GM12878 (cell line): ENCODE measurements at regions of chr22 and their contacts with region 1.

Region 1: GRCh38 chr22:22043296-22044078 is 60.9 kb upstream of the TOP3B start:
- DNase-seq: no peak
- ATAC-seq: peak; percentile 85
- H3K4me3 ChIP-seq: peak overlapping the region; percentile 44; the same call in 1 of the 2 replicates
- H3K27ac ChIP-seq: peak overlapping the region; percentile 58
- H3K4me1 ChIP-seq: peaks cover 15% of the 10 kb centered on the region
- H3K27me3 ChIP-seq: no peaks in the 10 kb centered on the region
- CTCF ChIP-seq: peak in 2 of 3 experiments; percentile 2 to 20; a peak in 1 of 6 replicates
- EP300 ChIP-seq: no peak
- POLR2A ChIP-seq: peak; percentile 56
- RAD21 ChIP-seq: no peak

Region 2: GRCh38 chr22:21927174-21927823 is 116.2 kb before region 1 on chr22:
- CTCF ChIA-PET with region 1: no interaction called
- POLR2A ChIA-PET with region 1: no interaction called
- RAD21 ChIA-PET with region 1: no interaction called
- SMC1A ChIA-PET with region 1: no interaction called
- in situ Hi-C with region 1: no loop called
- intact Hi-C with region 1: no loop called
- DNase-seq: no peak
- ATAC-seq: no peak
- H3K4me3 ChIP-seq: no peak overlapping the region
- H3K27ac ChIP-seq: no peak overlapping the region
- H3K4me1 ChIP-seq: no peaks in the 10 kb centered on the region
- H3K27me3 ChIP-seq: no peaks in the 10 kb centered on the region
- CTCF ChIP-seq: no peak
- EP300 ChIP-seq: no peak
- POLR2A ChIP-seq: no peak
- RAD21 ChIP-seq: no peak

Region 3: GRCh38 chr22:21972293-21972779 is 71.2 kb before region 1 on chr22:
- CTCF ChIA-PET with region 1: interaction called, 18 read pairs
- POLR2A ChIA-PET with region 1: no interaction called
- RAD21 ChIA-PET with region 1: interaction called, 3 read pairs
- SMC1A ChIA-PET with region 1: no interaction called
- in situ Hi-C with region 1: no loop called
- intact Hi-C with region 1: no loop called
- DNase-seq: no peak
- ATAC-seq: peak; percentile 92
- H3K4me3 ChIP-seq: no peak overlapping the region
- H3K27ac ChIP-seq: no peak overlapping the region
- H3K4me1 ChIP-seq: no peaks in the 10 kb centered on the region; the same call in 1 of the 2 replicates
- H3K27me3 ChIP-seq: no peaks in the 10 kb centered on the region
- CTCF ChIP-seq: peak; percentile 70 to 95 (median 94)
- EP300 ChIP-seq: no peak
- POLR2A ChIP-seq: no peak
- RAD21 ChIP-seq: peak; percentile 75

Region 4: DNA sequence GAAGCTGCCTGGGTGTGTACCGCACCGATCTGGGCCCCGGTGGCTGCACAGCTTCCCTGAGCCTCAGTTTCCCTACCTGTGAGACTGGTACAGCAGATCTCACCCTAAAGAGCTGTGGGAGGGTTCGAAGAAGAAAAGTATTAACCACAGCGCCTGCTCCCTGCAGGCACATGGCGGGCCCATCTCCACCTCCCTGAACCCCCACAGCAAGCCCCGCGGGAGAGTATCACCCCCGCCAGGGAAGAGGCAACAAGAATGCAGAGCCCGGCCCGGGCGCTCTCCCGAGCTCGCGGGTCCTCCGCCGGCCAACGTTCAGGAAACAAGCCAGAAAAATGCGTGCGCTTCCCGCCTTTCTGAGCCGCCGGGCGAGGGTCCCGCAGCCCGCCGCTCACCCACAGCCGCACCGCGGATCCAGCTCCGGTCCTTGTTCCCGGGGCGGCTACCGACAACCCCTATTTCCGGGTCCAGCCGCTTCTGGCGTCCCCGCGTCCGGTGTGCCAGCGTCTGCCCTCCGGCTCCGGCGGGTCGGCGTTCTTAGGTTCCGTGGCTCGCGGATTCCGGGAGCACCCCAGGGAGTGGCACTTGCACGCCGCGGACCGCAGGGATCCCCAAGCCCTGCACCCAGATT is 61.0 kb before region 1 on chr22 and contains the start of gene TOP3B:
- CTCF ChIA-PET with region 1: interaction called, 3 read pairs
- POLR2A ChIA-PET with region 1: interaction called, 3 read pairs
- RAD21 ChIA-PET with region 1: interaction called, 11 read pairs
- SMC1A ChIA-PET with region 1: interaction called, 3 read pairs
- in situ Hi-C with region 1: no loop called
- intact Hi-C with region 1: no loop called
- DNase-seq: peak; percentile 17
- ATAC-seq: peak; percentile 93
- H3K4me3 ChIP-seq: peak within 1 kb of the TSS; percentile 79
- H3K27ac ChIP-seq: peak within 1 kb of the TSS; percentile 69
- H3K4me1 ChIP-seq: peaks cover 4% of the 10 kb centered on the region
- H3K27me3 ChIP-seq: no peaks in the 10 kb centered on the region
- CTCF ChIP-seq: no peak
- EP300 ChIP-seq: no peak
- POLR2A ChIP-seq: peak; percentile 92
- RAD21 ChIP-seq: peak; percentile 30; the same call in 1 of the 2 replicates
- polyA plus RNA-seq, gene TOP3B: 0.60 to 1.6 TPM

Region 5: DNA sequence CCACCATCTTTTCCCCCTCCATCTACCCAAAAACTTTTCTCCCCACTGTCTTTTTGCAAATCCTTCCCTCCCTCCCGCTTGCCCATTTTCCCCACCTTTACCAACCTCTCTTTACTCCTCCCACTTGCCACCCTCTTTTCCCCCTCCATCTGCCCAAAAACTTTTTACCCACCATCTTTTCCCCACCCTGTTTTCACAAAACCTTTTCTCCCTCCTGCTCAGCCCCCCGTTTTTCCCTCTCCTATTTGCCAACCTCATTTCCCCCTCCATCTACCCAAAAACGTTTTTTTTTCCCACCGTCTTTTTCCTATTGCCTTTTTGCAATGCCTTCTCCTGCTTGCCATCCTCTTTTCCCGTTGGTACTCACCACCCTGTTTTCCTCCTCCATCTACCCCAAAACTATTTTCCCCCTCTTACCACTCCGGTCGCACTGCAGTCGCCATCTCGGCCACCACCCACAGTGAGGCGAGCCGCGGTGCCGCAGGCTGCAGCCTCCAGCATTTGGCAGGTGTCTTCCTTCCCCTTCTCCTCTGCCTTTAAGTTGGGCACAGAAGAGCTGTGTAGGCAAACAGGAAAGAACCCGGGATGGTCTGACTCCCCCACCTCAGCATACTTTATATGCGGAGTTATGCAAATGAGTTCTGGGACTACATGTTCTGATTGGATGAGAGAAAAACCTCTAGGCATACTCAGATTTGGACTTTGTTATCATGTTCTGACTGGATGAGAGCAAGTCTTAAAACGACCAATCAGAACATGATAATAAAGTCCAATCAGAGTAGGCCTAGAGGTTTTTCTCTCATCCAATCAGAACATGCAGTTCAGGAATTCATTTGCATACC is 79.9 kb after region 1 on chr22:
- CTCF ChIA-PET with region 1: interaction called, 5 read pairs
- POLR2A ChIA-PET with region 1: interaction called, 6 read pairs
- RAD21 ChIA-PET with region 1: interaction called, 12 read pairs
- SMC1A ChIA-PET with region 1: interaction called, 8 read pairs
- in situ Hi-C with region 1: no loop called
- intact Hi-C with region 1: no loop called
- DNase-seq: no peak
- ATAC-seq: no peak
- H3K4me3 ChIP-seq: no peak overlapping the region
- H3K27ac ChIP-seq: no peak overlapping the region
- H3K4me1 ChIP-seq: no peaks in the 10 kb centered on the region
- H3K27me3 ChIP-seq: no peaks in the 10 kb centered on the region
- CTCF ChIP-seq: no peak
- EP300 ChIP-seq: no peak
- POLR2A ChIP-seq: no peak
- RAD21 ChIP-seq: no peak

Region 6: GRCh38 chr22:22130953-22131608 is 87.6 kb after region 1 on chr22:
- CTCF ChIA-PET with region 1: interaction called, 4 read pairs
- POLR2A ChIA-PET with region 1: no interaction called
- RAD21 ChIA-PET with region 1: interaction called, 3 read pairs
- SMC1A ChIA-PET with region 1: interaction called, 14 read pairs
- in situ Hi-C with region 1: no loop called
- intact Hi-C with region 1: no loop called
- DNase-seq: no peak
- ATAC-seq: peak; percentile 50
- H3K4me3 ChIP-seq: no peak overlapping the region
- H3K27ac ChIP-seq: no peak overlapping the region
- H3K4me1 ChIP-seq: no peaks in the 10 kb centered on the region
- H3K27me3 ChIP-seq: no peaks in the 10 kb centered on the region
- CTCF ChIP-seq: no peak
- EP300 ChIP-seq: no peak
- POLR2A ChIP-seq: no peak
- RAD21 ChIP-seq: no peak

Region 7: DNA sequence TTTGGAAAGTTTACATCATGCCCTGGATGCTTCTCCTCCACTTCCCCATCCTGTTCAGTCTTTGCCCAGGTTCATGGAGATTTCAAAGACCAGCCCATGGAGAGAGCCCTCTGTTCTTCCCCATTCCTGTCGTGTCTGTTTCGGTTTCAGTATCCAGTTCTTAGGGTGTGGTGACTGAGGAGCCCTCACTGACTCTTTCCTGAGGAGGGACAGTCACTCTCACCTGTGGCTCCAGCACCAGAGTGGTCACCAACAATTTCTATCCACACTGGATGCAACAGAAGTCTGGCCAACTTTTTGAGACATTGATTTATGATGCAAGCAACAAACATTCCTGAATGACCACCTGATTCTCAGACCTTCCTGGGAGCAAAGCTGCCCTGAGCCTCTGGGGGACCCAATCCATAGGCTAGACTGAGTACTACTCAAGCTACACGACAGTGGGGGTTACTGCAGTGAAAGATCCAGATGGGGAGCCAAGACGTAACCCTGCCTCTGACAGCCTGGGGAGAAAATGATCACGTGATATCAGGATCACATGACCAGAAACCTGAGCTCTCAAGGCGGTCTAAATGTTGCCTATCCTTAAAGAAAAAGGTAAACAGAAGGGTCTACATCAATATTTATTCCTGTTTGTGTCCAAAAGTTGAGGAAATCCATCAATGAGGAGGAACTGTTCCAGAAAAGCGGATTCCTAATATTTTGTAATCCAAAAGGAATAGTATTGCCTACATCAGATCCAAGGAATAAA is 124.9 kb after region 1 on chr22:
- CTCF ChIA-PET with region 1: interaction called, 7 read pairs
- POLR2A ChIA-PET with region 1: interaction called, 9 read pairs
- RAD21 ChIA-PET with region 1: interaction called, 14 read pairs
- SMC1A ChIA-PET with region 1: interaction called, 5 read pairs
- in situ Hi-C with region 1: no loop called
- intact Hi-C with region 1: no loop called
- DNase-seq: peak; percentile 57
- ATAC-seq: peak; percentile 74
- H3K4me3 ChIP-seq: peak overlapping the region; percentile 52; the same call in 1 of the 2 replicates
- H3K27ac ChIP-seq: peak overlapping the region; percentile 83
- H3K4me1 ChIP-seq: peaks cover 15% of the 10 kb centered on the region
- H3K27me3 ChIP-seq: no peaks in the 10 kb centered on the region
- CTCF ChIP-seq: no peak
- EP300 ChIP-seq: no peak
- POLR2A ChIP-seq: no peak; the same call in 1 of the 2 replicates
- RAD21 ChIP-seq: no peak

Region 8: DNA sequence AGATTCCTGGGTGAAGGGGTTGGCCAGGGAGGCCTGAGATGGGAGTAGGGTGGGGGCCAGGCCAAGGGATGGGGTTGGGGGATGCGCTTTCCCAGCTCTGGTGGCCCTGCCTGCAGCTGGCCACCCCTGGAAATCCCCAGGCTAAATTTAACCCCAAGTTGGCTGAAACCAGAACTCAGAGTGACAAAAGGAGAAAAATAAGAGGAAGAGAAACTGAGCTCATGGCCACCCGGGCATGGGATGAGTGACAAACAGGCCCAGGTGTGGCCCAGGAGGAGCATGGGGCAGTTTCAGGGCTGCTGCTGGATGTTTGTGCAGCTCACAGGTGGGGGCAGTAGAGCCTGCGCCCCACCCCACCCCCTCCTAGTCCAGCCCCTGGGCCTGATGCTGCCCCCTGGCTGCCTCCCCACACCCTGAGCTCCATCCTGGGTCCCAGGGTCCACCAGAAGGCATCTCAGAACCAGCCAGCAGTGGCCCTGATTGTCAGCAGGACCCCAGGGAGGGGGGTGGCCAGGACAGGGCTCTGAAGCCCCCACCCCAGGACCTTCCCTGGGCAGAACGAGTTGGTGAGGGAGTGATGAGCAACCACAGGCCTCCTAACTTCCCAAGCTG is 892.2 kb after region 1 on chr22:
- CTCF ChIA-PET with region 1: interaction called, 3 read pairs
- POLR2A ChIA-PET with region 1: interaction called, 4 read pairs
- RAD21 ChIA-PET with region 1: interaction called, 10 read pairs
- SMC1A ChIA-PET with region 1: interaction called, 3 read pairs
- in situ Hi-C with region 1: no loop called
- intact Hi-C with region 1: no loop called
- DNase-seq: peak; percentile 99
- ATAC-seq: peak; percentile 84
- H3K4me3 ChIP-seq: peak overlapping the region; percentile 24; the same call in 1 of the 2 replicates
- H3K27ac ChIP-seq: peak overlapping the region; percentile 99
- H3K4me1 ChIP-seq: peaks cover 92% of the 10 kb centered on the region
- H3K27me3 ChIP-seq: no peaks in the 10 kb centered on the region
- CTCF ChIP-seq: peak; percentile 53 to 83 (median 71)
- EP300 ChIP-seq: peak; percentile 100
- POLR2A ChIP-seq: no peak; the same call in 1 of the 2 replicates
- RAD21 ChIP-seq: peak; percentile 75